Prostate gland (tissue), 2 donors: ENCODE measurements at regions of chr2 and their contacts with region 1.

Region 1: DNA sequence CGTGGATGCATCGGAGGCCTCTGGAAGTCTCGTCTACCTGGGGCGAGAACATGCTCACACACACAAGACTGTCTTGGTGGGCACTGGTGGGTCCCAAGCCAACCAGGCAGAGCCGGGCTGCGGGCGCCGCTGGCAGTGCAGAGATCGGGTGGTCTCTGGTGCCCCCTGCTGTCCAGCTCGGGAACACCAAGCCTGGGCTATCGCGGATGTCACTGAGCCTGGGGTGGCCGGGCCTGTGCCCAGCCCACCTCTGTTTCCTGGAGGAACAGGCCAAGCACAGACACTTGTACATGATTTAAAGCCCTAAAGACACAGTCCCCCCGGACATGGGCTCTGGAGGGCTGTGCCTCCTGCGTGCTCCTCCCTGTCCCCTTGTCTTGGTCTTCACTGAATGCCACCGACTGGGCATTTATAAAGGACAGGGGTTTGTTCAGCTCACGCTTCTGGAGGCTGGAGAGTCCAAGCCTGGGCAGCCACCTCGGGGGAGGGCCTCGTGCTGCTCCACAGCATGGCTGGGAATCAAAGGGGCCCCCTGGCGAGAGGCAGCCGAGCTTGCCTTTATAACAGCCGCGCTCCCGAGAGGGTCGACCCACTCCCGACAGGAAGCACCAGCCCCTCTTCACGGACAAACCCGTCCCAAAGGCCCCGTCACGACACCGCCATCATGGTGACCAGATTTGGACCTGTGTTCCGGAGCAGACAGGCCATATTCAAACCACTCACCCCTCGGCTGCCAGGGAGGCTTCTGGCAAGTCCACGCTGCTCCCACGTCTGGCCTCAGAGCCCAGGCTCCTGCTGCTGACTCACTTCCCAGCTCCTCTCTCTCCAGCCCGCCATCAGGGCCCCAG is 3.6 kb upstream of the OTOS start:
- DNase-seq: peak; percentile 40
- H3K4me3 ChIP-seq: no peak overlapping the region
- H3K27ac ChIP-seq: no peak overlapping the region
- H3K4me1 ChIP-seq: no peaks in the 10 kb centered on the region
- H3K27me3 ChIP-seq: no peaks in the 10 kb centered on the region
- CTCF ChIP-seq: peak; percentile 89 to 97 (median 93)
- POLR2A ChIP-seq: no peak

Region 2: DNA sequence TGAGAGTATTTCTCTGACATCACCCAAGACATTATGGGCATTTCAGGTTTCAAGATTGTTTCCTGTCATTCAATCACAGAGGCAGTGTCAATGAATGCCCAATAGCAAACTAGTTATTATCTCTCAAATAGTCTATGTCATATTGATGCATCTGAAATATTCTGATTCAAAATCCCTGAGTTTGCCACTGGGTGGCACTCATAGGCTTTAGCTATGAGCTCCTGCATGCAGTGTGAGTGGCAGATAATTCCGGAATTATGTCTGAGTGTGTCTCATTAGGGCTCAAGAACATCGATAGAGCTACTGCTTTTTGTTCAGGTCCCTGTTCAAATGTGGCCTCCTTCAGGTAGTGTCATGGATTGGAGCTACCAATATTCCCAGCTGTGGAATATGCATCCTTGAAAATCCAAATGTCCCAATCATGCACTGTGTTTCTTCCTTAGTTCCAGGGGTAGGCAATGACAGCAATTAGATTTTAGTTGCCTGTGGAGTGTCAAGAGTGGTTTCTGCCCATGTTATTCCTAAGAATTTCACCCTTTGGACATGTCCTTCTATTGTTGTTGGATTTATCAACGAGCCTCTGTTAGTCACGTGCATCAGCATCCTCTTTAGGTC is 82.9 kb before region 1 on chr2:
- intact Hi-C with region 1: loop called (anchors 2 kb)
- DNase-seq: peak; percentile 26
- H3K4me3 ChIP-seq: no peak overlapping the region
- H3K27ac ChIP-seq: no peak overlapping the region
- H3K4me1 ChIP-seq: no peaks in the 10 kb centered on the region
- H3K27me3 ChIP-seq: no peaks in the 10 kb centered on the region
- CTCF ChIP-seq: peak in 3 of 4 experiments; percentile 55 to 79 (median 68)
- POLR2A ChIP-seq: no peak

Region 3: DNA sequence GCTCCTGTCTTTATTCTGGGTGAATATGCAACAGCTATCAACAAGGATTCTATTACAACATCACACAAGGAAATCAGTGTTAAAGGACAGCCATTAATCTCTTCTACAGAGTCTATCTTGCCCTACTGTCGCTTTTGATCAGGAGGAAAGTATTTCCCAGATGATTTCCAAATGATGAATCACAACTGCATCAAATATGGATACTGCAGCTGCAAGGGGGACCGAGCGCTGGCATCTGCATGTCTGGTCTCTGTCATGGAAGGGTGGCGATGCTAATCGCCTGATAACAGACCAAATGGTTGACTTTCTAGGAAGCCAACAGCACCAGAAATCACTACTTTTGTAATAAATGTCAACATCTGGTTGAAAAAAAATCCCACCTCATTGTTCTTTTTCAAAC is 69.5 kb before region 1 on chr2:
- intact Hi-C with region 1: no loop called
- DNase-seq: no peak
- H3K4me3 ChIP-seq: no peak overlapping the region
- H3K27ac ChIP-seq: no peak overlapping the region
- H3K4me1 ChIP-seq: no peaks in the 10 kb centered on the region
- H3K27me3 ChIP-seq: no peaks in the 10 kb centered on the region
- CTCF ChIP-seq: no peak
- POLR2A ChIP-seq: no peak